Left cardiac atrium (tissue), 4 donors: ENCODE measurements at regions of chr16 and their contacts with region 1.

Region 1: GRCh38 chr16:75555707-75556430 is at the start of gene TMEM231:
- DNase-seq: peak; percentile 99
- ATAC-seq: peak; percentile 97
- total RNA-seq, gene TMEM231: 5.6 to 7.3 TPM

Region 2: GRCh38 chr16:75402821-75403475 is 152.9 kb before region 1 on chr16:
- intact Hi-C with region 1: no loop called
- DNase-seq: no peak
- ATAC-seq: peak; percentile 45 to 54

Region 3: DNA sequence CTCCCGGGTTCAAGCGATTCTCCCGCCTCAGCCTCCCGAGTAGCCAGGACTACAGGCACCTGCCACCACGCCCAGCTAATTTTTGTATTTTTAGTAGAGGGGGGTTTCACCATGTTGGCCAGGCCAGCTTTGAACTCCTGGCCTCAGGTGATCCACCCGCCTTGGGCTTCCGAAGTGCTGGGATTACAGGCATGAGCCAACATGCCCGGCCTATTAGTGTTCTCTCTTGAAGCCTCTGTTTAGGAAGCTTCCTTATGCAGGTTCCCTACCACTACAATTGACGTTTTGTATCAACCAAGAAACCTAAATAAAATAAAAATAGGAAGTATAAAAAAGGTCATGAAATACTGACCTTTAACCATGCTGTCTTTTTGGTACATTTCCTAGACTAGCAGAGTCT is 36.0 kb before region 1 on chr16:
- intact Hi-C with region 1: no loop called
- DNase-seq: no peak
- ATAC-seq: no peak

Region 4: DNA sequence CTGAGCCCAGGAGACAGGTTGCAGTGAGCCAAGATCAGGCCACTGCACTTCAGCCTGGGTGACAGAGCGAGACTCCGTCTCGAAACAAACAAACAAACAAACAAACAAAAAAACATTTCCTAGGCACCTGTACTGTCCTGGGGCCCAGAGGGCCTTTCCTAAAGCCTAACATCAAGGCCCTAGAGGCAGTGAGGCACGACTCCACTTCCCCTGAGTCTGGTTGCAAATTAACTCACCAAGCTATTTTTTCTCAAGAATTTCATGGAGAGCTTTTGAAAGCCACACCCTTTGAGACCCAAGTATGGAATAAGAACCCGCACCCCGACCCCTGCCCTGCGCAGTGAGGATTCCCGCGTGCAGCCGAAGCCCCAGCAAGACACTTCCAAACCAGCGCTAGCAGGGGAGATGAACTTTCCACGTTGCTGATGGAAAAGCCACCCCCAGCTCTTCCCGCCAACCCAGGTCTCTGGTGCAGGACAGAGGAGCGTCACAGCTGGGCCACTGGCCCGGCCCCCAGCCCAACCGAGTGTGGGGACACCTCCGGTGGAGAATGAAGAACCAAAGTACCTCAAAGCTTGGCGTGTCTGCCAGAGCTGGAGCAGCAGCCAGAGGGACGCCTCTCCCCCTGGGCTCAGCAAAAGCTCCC is 21.2 kb before region 1 on chr16:
- intact Hi-C with region 1: no loop called
- DNase-seq: no peak
- ATAC-seq: no peak

Region 5: DNA sequence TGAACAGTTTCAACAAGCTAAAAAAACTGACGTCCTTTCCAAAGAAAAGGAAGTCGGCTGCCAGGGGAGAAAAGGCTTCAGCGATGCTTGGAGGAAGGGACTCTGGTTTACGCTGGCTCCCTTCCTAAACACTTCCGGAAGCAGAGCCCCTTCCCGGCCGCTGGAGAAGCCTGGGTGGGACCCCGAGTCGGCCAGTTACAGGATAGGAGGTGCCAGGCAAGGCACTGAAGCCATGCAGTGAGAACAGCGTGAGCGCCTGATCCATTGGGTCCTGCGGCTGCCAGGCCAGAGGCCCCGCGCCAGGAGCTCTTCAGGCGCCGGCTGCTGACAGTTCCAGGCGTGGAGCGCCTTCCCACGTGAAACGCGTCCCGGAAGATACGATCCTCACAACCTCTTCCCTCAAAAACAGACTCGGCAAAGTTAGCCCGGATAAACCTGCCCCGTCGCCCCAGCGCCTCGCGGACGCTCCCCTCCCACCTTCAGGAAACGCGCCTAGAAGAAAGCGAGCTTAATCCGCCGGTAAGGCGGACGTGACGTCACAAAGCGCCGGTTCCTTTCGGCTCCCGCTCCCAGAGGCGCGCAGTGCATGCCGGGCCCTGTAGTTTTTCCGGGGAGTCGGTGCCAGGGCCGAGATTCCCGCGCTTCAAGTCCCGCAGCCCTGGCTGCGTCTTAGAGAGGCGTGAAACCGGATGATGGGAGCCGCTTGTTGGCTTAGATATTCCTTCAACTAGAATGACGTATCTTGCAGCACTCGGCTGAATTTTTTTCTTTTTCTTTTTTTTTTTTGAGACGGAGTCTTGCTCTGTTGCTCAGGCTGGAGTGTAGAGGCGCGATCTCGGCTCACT is 67.1 kb after region 1 on chr16 and contains the start of gene ADAT1:
- intact Hi-C with region 1: loop called in 1 of 2 experiments (anchors 2 kb)
- DNase-seq: peak; percentile 100
- ATAC-seq: peak; percentile 97 to 99
- total RNA-seq, gene ADAT1: 18.6 to 25.3 TPM